Prostate gland (tissue), 2 donors: ENCODE measurements at regions of chr16 and their contacts with region 1.

Region 1: GRCh38 chr16:57711346-57712026 is 16.9 kb downstream of the DRC7 start:
- DNase-seq: no peak
- H3K4me3 ChIP-seq: no peak overlapping the region
- H3K27ac ChIP-seq: no peak overlapping the region
- H3K4me1 ChIP-seq: no peaks in the 10 kb centered on the region
- H3K27me3 ChIP-seq: no peaks in the 10 kb centered on the region
- CTCF ChIP-seq: no peak
- POLR2A ChIP-seq: no peak

Region 2: GRCh38 chr16:57653936-57654335 is 57.5 kb before region 1 on chr16:
- intact Hi-C with region 1: loop called (anchors 10 kb)
- DNase-seq: no peak
- H3K4me3 ChIP-seq: no peak overlapping the region
- H3K27ac ChIP-seq: no peak overlapping the region
- H3K4me1 ChIP-seq: no peaks in the 10 kb centered on the region
- H3K27me3 ChIP-seq: no peaks in the 10 kb centered on the region
- CTCF ChIP-seq: no peak
- POLR2A ChIP-seq: no peak